ENCODE measurements at regions of chr12 and their contacts with region 1.

Region 1: DNA sequence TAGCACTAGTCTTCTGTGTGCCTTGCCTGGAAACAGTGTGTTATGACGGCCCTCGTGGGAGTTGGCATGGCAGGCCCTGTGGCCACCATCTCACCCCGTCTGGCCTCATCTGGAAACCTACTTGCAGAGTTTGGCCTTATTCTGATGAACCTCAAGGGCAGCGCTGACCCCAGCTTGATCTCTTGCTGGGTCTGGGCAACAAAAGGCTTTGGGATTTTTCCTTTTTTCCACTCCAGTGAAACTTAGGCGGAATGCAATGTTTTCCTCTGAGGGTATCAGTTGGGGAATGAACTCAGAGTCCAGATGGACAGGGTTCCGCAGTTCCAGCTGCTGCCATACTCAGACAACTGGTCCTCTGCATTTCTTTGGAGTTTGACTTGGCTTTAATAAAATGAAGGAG is 15.9 kb downstream of the CACNA1C start:
- DNase-seq: no peak
- H3K4me3 ChIP-seq: no peak overlapping the region
- CTCF ChIP-seq: no peak

Region 2: GRCh38 chr12:1279050-1279449 is 789.6 kb before region 1 on chr12:
- in situ Hi-C with region 1: no loop called
- DNase-seq: no peak
- H3K4me3 ChIP-seq: no peak overlapping the region
- CTCF ChIP-seq: peak; percentile 10

Region 3: DNA sequence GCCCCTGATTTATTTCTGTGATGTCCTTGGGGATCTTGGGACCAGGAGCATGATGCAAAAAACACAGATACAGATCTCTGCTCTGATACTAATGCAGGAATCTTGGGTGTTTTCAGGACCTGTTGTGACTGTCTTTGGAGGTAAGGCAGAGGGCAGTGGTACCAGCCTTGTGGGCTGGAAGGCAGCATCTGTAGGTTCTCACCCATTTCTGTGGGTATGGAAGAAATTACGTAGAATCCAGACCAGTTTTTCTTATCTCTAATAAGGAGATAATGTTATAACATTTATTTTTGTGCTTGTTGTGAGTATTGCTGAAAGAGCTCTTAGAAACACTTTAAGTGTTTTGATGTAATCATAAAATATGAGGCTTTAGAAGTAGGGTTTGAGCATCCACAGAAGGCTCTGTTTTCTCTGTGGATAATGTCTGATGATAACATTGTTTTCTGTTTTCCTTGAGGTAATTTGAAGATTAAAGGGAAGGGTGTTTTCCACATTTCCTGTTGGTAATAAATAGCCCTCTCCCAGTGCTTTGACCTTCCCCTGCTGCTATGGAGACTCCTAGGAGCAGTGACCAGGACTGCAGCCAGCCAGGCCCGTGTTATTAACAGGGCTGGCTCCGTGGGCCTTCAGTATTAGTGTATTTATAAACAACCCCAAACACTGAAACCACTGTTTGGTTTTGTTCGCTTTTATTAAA is 55.0 kb before region 1 on chr12:
- in situ Hi-C with region 1: no loop called
- DNase-seq: no peak
- H3K4me3 ChIP-seq: no peak overlapping the region
- CTCF ChIP-seq: no peak

Region 4: GRCh38 chr12:2168808-2169207 is 100.2 kb after region 1 on chr12:
- in situ Hi-C with region 1: loop called (anchors 5 kb)
- DNase-seq: no peak
- H3K4me3 ChIP-seq: no peak overlapping the region
- CTCF ChIP-seq: no peak

Region 5: GRCh38 chr12:2284857-2285256 is 216.2 kb after region 1 on chr12:
- in situ Hi-C with region 1: loop called (anchors 5 kb)
- DNase-seq: peak; percentile 70
- H3K4me3 ChIP-seq: no peak overlapping the region
- CTCF ChIP-seq: peak; percentile 87

Measured in astrocyte of the cerebellum (primary cell).